Posterior vena cava (tissue), 2 donors: ENCODE measurements at regions of chr5 and their contacts with region 1.

Region 1: GRCh38 chr5:53613036-53613435 is 52.6 kb downstream of the NDUFS4 start:
- DNase-seq: no peak

Region 2: GRCh38 chr5:53126514-53126913 is 486.5 kb before region 1 on chr5:
- intact Hi-C with region 1: loop called in 1 of 2 experiments (anchors 5 kb)
- DNase-seq: no peak